Breast epithelium (tissue), 4 donors: ENCODE measurements at regions of chr3 and their contacts with region 1.

Region 1: DNA sequence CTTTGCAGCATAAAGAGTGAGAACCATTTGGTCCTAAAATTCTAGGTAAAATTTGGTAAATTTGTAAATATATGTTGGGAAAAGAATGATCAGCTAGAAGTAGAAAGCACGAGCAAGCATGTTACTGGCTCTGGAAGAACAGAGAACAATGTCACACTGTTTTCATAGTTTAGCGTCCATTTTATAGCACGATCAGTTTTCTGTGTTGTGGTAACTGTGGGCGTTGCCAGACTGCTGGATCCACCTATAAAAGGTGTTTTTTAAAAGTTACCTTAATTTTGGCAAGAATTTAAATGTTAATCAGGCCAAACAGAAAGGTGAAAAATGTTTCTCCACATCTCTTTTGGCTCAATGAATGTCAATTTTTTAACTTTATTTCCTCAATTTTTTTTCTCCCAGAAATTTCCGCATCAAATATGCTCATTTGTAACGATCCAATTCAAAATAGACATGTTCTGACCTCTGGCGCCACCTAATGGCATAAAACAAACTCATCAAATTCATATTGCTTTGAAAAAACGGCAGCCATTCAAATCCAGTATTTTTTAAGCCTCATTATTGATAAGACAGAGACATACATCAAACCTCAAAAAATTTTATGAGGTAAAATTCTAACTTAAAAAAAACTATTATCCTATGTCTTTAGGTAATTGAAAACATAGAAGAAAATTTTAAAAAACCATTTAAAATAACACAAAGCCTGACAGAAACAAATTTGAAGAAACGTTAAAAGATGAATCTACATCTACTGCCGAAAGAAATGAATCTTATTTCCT is 5.5 kb upstream of the GP5 start:
- DNase-seq: no peak
- H3K4me3 ChIP-seq: no peak overlapping the region
- H3K27ac ChIP-seq: no peak overlapping the region
- H3K4me1 ChIP-seq: no peaks in the 10 kb centered on the region
- H3K27me3 ChIP-seq: no peaks in the 10 kb centered on the region
- CTCF ChIP-seq: peak in 2 of 3 donors; percentile 63 to 67
- POLR2A ChIP-seq: no peak

Region 2: GRCh38 chr3:194333212-194333980 is 71.2 kb before region 1 on chr3:
- intact Hi-C with region 1: loop called (anchors 10 kb)
- DNase-seq: peak; percentile 72 to 91
- H3K4me3 ChIP-seq: peak overlapping the region; percentile 19 to 66 (median 49)
- H3K27ac ChIP-seq: no peak overlapping the region
- H3K4me1 ChIP-seq: peaks cover 0 to 4% of the 10 kb centered on the region in 2 donors
- H3K27me3 ChIP-seq: no peaks in the 10 kb centered on the region
- CTCF ChIP-seq: peak; percentile 94 to 99 (median 97)
- POLR2A ChIP-seq: no peak